ENCODE measurements at regions of chr2 and their contacts with region 1.

Region 1: GRCh38 chr2:46351750-46352138 is 54.5 kb downstream of the EPAS1 start:
- DNase-seq: peak; percentile 93
- H3K4me3 Mint-ChIP-seq: peak overlapping the region; percentile 81
- H3K27ac Mint-ChIP-seq: peak overlapping the region; percentile 92
- H3K4me1 Mint-ChIP-seq: peaks cover 68% of the 10 kb centered on the region
- H3K27me3 Mint-ChIP-seq: no peaks in the 10 kb centered on the region

Region 2: GRCh38 chr2:45974056-45974455 is 377.7 kb before region 1 on chr2:
- CTCF ChIA-PET with region 1: no interaction called
- intact Hi-C with region 1: no loop called
- DNase-seq: no peak
- H3K4me3 Mint-ChIP-seq: no peak overlapping the region
- H3K27ac Mint-ChIP-seq: no peak overlapping the region
- H3K4me1 Mint-ChIP-seq: no peaks in the 10 kb centered on the region
- H3K27me3 Mint-ChIP-seq: no peaks in the 10 kb centered on the region

Region 3: GRCh38 chr2:46029332-46029811 is 322.4 kb before region 1 on chr2:
- CTCF ChIA-PET with region 1: no interaction called
- intact Hi-C with region 1: no loop called
- DNase-seq: no peak
- H3K4me3 Mint-ChIP-seq: no peak overlapping the region
- H3K27ac Mint-ChIP-seq: no peak overlapping the region
- H3K4me1 Mint-ChIP-seq: peaks cover 10% of the 10 kb centered on the region
- H3K27me3 Mint-ChIP-seq: no peaks in the 10 kb centered on the region

Region 4: GRCh38 chr2:46315103-46315890 is 36.4 kb before region 1 on chr2:
- CTCF ChIA-PET with region 1: no interaction called
- intact Hi-C with region 1: no loop called
- DNase-seq: no peak
- H3K4me3 Mint-ChIP-seq: no peak overlapping the region
- H3K27ac Mint-ChIP-seq: no peak overlapping the region
- H3K4me1 Mint-ChIP-seq: peaks cover 2% of the 10 kb centered on the region
- H3K27me3 Mint-ChIP-seq: peaks cover 6% of the 10 kb centered on the region

Region 5: DNA sequence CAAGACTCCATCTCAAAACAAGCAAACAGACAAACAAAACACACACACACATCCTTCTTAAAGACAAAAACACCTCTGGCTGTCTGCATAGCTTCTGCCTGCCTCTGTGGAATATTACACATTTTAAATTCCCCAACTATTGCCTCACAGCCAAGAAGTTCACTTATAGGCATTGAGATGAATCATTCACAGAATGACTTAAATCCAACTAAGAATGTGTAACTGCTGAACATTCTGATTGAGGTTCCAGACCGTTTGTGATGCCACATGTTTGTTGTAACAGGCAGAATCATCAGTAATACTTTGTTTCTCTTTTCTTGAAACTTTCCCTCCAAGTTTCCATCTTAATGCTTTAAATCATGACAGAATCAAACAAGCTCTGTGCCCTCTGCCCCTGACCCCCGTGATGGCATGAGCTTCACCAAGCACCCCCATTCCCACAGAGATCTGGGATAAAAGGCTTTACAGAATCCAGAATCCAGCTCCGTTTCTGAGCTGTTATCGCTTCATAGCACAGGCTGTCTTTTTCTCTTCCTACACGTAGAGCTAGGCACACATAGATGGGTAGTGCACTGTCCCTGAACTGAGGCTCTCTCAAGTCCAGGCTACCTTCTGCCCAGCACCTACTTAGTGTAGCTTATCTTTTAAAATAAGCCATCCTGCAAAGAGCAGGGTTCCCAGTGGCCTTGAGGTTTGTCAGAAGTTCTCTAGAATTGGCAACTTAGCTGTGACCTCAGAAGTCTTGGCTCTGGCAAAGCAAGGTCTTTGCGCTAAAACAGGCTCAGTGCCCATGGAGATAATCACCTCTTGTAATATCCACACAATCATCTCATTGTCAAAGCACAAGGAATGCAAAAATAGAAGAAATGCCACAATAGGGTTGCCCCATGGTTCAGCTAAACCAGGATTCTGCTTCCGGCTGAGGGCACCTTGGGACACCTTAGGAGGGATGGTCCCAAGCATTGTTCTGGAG is 21.7 kb before region 1 on chr2:
- CTCF ChIA-PET with region 1: interaction called, 3 read pairs
- intact Hi-C with region 1: loop called (anchors 1 kb)
- DNase-seq: no peak
- H3K4me3 Mint-ChIP-seq: no peak overlapping the region
- H3K27ac Mint-ChIP-seq: peak overlapping the region; percentile 7
- H3K4me1 Mint-ChIP-seq: peaks cover 11% of the 10 kb centered on the region
- H3K27me3 Mint-ChIP-seq: peaks cover 2% of the 10 kb centered on the region

Measured in activated naive CD4-positive, alpha-beta T cell treated with anti-CD3 and anti-CD28 coated beads for 36 hours (primary cell).